T-cell (primary cell): ENCODE measurements at regions of chr17 and their contacts with region 1.

Region 1: DNA sequence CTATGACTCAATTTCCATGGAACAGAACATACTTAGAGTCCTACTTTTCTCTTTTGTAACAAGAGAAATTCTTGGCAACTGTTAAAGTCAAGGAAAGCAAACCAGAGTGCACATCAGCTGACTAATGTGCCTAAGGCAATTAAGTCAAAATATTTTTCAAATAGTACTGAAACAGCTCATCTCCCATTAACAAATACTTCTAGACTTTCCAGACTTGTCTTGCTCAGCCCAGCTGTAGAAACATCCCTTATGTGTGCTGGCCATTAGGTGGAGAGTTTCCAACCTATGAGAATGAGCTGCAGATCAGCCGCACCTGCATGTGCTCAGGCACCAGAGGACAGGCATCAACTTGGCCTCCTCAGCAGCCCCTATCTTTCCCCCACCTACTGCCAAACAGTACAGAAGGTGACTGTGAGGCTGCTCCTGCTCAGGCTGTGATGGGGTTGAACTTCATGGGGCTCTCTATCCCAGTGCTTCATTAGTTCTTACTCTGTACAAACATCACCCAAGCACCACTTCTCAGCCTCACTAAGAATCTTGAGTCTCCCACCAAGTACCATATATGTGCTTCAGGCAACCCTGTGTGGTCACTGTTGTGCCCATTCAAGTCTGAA is 32.2 kb downstream of the TEX2 start:
- DNase-seq: no peak
- ATAC-seq: no peak
- H3K4me3 ChIP-seq: no peak overlapping the region
- H3K4me3 Mint-ChIP-seq: no peak overlapping the region
- H3K27ac ChIP-seq: no peak overlapping the region
- H3K27ac Mint-ChIP-seq: no peak overlapping the region
- H3K4me1 ChIP-seq: no peaks in the 10 kb centered on the region
- H3K4me1 Mint-ChIP-seq: peaks cover 2 to 4% (median 3%) of the 10 kb centered on the region in 3 donors
- H3K27me3 ChIP-seq: no peaks in the 10 kb centered on the region
- H3K27me3 Mint-ChIP-seq: no peaks in the 10 kb centered on the region

Region 2: DNA sequence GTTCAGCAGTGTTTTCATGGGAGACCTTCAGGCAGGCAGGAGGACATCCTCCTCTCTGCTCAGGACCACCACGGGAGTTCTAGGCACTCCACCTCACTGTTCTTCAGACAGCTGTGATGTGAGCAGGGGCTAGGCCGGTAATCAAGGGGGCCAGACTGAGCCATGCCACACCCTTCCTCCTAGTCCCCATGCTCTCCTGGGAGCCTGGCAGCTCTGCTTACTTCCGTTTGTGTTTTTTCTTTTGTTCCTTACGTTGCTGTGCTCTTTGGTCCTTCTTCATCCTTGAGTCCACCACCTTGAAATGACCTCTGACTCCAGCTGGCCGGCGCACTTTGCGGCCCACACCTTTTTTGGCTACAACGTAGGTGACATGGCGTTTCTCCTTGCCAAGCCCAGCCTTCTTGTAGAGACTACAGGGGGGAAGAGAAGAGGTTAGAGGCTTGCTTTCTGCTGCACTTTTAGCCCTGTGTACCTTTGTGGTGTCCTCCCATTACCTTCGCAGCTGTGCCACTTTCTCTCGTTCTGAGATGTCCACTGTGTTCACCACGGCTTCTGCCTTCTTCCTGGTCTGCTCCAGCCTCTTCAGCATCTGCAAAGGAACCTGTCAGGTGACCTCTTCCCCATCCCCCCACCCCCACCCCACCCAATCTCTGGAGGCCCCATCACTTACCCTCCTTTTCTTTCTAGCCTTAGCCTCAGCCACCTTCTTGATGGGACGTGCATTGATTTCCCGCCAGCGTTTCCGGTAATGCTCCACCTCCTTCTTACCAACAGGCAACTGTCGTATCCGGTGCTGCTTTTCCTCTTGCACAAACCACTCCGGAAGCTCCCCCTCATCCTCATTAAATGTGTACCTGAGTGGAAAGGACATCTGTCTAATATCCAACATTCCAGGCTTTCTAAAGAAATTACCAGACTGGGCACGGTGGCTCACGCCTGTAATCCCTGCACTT is 411.0 kb before region 1 on chr17:
- CTCF ChIA-PET with region 1: no interaction called
- POLR2A ChIA-PET with region 1: no interaction called
- DNase-seq: no peak
- ATAC-seq: peak in 3 of 4 experiments; percentile 32 to 55 (median 55)
- H3K4me3 ChIP-seq: no peak overlapping the region
- H3K4me3 Mint-ChIP-seq: peak overlapping the region in 2 of 3 donors; percentile 17 to 43
- H3K27ac ChIP-seq: no peak overlapping the region
- H3K27ac Mint-ChIP-seq: peak overlapping the region; percentile 81 to 85
- H3K4me1 ChIP-seq: peaks cover 0 to 7% of the 10 kb centered on the region in 2 experiments
- H3K4me1 Mint-ChIP-seq: peaks cover 19 to 43% (median 24%) of the 10 kb centered on the region in 3 donors
- H3K27me3 ChIP-seq: no peaks in the 10 kb centered on the region
- H3K27me3 Mint-ChIP-seq: no peaks in the 10 kb centered on the region

Region 3: DNA sequence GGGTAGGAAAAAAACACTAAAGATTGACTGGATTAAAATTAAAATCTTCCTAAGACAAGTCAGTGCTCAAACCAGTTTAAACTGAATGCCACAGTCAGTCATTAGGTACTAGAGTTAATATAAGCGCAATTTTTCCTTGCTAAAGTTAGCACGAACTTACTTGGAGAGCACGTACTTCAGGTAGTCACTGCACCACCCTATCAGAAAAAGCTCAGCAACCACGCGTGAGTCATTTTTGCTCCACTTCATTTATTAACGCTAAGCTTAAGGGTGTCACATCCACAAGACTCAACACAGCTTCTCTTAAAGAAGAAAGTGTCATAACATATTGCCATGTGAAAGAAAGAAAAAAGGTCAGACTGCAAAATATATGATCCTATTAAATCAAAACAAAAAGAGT is 20.9 kb before region 1 on chr17:
- CTCF ChIA-PET with region 1: no interaction called
- POLR2A ChIA-PET with region 1: interaction called in 1 of 2 experiments, 11 read pairs
- DNase-seq: no peak
- ATAC-seq: no peak
- H3K4me3 ChIP-seq: no peak overlapping the region
- H3K4me3 Mint-ChIP-seq: no peak overlapping the region
- H3K27ac ChIP-seq: no peak overlapping the region
- H3K27ac Mint-ChIP-seq: no peak overlapping the region
- H3K4me1 ChIP-seq: no peaks in the 10 kb centered on the region
- H3K4me1 Mint-ChIP-seq: peaks cover 11 to 23% (median 12%) of the 10 kb centered on the region in 3 donors
- H3K27me3 ChIP-seq: no peaks in the 10 kb centered on the region
- H3K27me3 Mint-ChIP-seq: no peaks in the 10 kb centered on the region